H1 (cell line): ENCODE measurements at regions of chr17 and their contacts with region 1.

Region 1: DNA sequence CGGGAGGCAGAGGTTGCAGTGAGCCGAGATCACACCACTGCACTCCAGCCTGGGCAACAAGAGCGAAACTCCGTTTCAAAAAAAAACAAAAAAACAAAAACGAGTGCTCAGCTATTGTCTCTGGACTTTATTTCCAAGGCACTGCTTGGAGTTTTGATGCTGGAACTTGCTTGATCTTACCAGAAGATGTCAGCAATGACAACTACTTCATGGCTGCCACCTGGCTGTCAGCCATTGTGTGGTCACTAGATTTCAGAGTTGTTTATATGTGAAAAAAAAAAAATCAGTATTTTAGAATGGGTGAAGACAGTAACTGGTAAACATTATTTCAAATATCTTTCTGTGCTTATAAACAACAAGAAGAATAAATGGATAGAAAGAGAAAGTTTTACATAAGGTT is 26.3 kb upstream of the OR4D1 start:
- DNase-seq: no peak
- H3K4me3 ChIP-seq: no peak overlapping the region
- H3K27ac ChIP-seq: no peak overlapping the region
- H3K4me1 ChIP-seq: no peaks in the 10 kb centered on the region
- H3K27me3 ChIP-seq: no peaks in the 10 kb centered on the region; a peak in 1 of 7 replicates
- CTCF ChIP-seq: peak; percentile 3 to 95 (median 57)
- EP300 ChIP-seq: no peak
- POLR2A ChIP-seq: no peak
- RAD21 ChIP-seq: peak; percentile 71 to 80

Region 2: GRCh38 chr17:58136669-58137283 is 14.9 kb after region 1 on chr17:
- CTCF ChIA-PET with region 1: interaction called, 20 read pairs
- POLR2A ChIA-PET with region 1: interaction called, 3 read pairs
- DNase-seq: peak in 1 of 2 experiments; percentile 48
- H3K4me3 ChIP-seq: no peak overlapping the region
- H3K27ac ChIP-seq: no peak overlapping the region
- H3K4me1 ChIP-seq: no peaks in the 10 kb centered on the region
- H3K27me3 ChIP-seq: peaks cover 0 to 1% (median 0%) of the 10 kb centered on the region in 4 experiments; a peak in 1 of 7 replicates
- CTCF ChIP-seq: peak; percentile 49 to 63 (median 57)
- EP300 ChIP-seq: no peak
- POLR2A ChIP-seq: no peak
- RAD21 ChIP-seq: peak; percentile 52 to 62

Region 3: GRCh38 chr17:58172369-58173071 is 50.6 kb after region 1 on chr17:
- CTCF ChIA-PET with region 1: interaction called, 71 read pairs
- POLR2A ChIA-PET with region 1: no interaction called
- DNase-seq: no peak
- H3K4me3 ChIP-seq: no peak overlapping the region
- H3K27ac ChIP-seq: no peak overlapping the region
- H3K4me1 ChIP-seq: no peaks in the 10 kb centered on the region
- H3K27me3 ChIP-seq: peaks cover 0 to 3% (median 2%) of the 10 kb centered on the region in 4 experiments; a peak in 1 of 7 replicates
- CTCF ChIP-seq: peak in 2 of 3 experiments; percentile 73 to 77; a peak in 3 of 4 replicates
- EP300 ChIP-seq: no peak
- POLR2A ChIP-seq: no peak
- RAD21 ChIP-seq: peak; percentile 87 to 92

Region 4: DNA sequence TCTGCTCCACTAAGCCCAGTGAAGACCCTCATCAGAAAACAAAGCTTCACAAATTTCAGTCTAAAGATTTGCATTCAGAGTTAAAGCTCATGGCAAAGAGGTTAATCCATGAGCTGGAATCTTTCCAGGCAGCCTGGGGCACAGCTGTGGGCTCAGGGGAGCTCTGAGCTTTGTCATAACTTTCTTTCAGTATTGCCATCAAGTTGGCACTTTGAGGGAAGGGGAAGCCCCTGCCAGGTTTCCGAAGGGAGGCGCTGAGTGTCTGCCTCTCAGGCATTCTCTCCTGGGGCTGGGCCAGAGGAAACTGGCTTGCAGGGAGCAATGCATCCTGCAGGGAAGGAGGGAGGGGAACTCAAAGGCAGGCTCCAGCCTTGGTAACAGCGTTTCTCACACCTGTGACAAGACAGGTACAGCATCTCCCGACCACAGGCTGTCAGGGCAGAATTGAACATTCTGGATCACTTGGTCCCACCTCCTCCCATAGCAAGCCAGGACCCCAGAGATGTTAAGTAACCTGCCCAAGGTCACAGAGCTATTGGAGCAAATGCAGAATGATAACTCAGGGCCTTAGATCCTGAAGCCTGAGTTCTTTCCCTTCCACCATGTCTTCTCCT is 120.4 kb after region 1 on chr17:
- CTCF ChIA-PET with region 1: no interaction called
- POLR2A ChIA-PET with region 1: no interaction called
- DNase-seq: no peak
- H3K4me3 ChIP-seq: no peak overlapping the region
- H3K27ac ChIP-seq: no peak overlapping the region
- H3K4me1 ChIP-seq: peaks cover 0 to 10% (median 0%) of the 10 kb centered on the region in 4 experiments; a peak in 3 of 7 replicates
- H3K27me3 ChIP-seq: peaks cover 0 to 9% (median 8%) of the 10 kb centered on the region in 4 experiments; a peak in 5 of 7 replicates
- CTCF ChIP-seq: 0 out of 4 replicates have a peak, but pooled peaks of 1 of the 3 experiments have one; percentile 4
- EP300 ChIP-seq: no peak
- POLR2A ChIP-seq: no peak
- RAD21 ChIP-seq: peak in 1 of 2 experiments; percentile 31; a peak in 1 of 4 replicates